HEK293 (cell line): ENCODE measurements at regions of chr12 and their contacts with region 1.

Region 1: GRCh38 chr12:48061948-48062719 is 43.7 kb downstream of the SENP1 start:
- H3K4me3 ChIP-seq: no peak overlapping the region
- H3K27ac ChIP-seq: no peak overlapping the region
- H3K4me1 ChIP-seq: no peaks in the 10 kb centered on the region
- CTCF ChIP-seq: no peak

Region 2: DNA sequence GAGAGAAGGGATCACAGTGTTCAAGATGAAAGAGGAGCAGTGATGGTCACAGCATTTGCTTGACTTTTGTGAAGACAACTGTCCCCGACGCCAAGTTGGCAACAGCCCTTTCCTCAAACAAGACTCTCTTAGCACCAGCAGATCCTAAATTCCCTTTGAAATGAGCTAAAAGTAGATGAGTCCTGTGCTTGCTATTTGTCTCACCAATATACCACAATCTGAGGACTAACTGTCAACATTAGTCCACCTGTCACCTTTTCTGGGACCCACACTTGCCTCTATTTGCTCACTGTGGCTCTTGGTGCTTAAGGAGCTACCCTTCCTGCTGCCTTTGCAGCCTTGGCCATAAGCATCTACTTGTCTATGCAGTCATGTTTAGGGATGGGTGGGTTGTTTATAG is 10.5 kb before region 1 on chr12:
- CTCF ChIA-PET with region 1: interaction called, 11 read pairs
- POLR2A ChIA-PET with region 1: no interaction called
- H3K4me3 ChIP-seq: no peak overlapping the region
- H3K27ac ChIP-seq: no peak overlapping the region
- H3K4me1 ChIP-seq: no peaks in the 10 kb centered on the region
- CTCF ChIP-seq: no peak

Region 3: DNA sequence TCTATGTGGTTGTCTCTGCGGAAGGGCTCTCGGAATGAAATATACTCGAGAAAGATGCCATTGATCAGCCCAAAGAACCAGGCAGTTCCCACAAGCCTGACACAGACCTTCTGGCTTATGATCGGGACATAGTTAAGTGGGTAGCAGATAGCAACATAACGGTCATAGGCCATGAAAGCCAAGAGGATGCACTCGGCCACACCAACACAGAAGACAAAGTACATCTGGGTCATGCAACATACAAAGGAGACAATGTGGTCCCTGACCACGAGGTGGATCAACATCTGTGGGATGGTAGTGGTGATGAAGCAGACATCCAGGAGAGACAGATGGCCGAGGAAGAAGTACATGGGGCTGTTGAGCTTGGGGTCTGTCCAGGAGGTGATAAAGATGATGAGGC is 140.6 kb after region 1 on chr12:
- CTCF ChIA-PET with region 1: no interaction called
- POLR2A ChIA-PET with region 1: no interaction called
- H3K4me3 ChIP-seq: no peak overlapping the region
- H3K27ac ChIP-seq: no peak overlapping the region
- H3K4me1 ChIP-seq: peaks cover 12% of the 10 kb centered on the region
- CTCF ChIP-seq: no peak